CD8-positive, alpha-beta T cell (primary cell): ENCODE measurements at regions of chr11 and their contacts with region 1.

Region 1: DNA sequence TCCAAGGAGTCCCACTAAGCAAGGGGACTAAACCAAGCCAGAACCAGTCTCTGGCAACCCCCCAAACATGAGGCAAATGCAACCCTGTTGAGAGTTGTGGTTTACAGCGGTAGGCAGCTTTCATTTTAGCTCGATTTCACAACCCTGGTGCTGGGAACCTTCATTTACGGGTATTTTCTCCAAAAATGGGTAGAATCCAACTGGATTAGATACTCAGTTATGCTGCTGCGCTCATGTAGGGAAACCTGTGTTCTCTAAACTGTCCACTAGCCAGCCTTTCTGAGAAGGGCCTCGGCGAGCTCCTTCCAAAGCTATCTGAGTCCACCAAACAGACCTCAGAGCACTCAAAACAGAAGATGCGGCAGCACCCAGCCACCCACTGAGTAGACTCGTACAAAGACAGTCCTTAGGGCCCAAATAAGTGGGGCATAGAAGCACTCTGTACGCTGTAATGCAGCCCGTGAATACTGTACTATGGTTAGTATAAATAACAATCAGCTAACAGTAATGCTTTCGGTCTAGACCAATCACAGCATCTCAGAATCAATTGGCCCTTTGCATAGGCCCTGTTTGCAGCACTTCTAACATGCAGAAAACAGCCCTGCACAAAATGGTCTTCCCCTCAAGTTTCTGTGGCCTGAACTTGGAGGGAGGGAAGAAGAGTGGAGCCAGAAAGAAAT is 104.7 kb downstream of the ETS1 start:
- DNase-seq: peak in 4 of 9 experiments; percentile 61 to 91 (median 82)
- ATAC-seq: peak; percentile 62
- H3K4me3 ChIP-seq: peak overlapping the region; percentile 26 to 40
- H3K4me3 Mint-ChIP-seq: peak overlapping the region; percentile 71
- H3K27ac ChIP-seq: peak overlapping the region; percentile 63 to 88
- H3K27ac Mint-ChIP-seq: peak overlapping the region; percentile 99
- H3K4me1 ChIP-seq: peaks cover 96% of the 10 kb centered on the region
- H3K4me1 Mint-ChIP-seq: peaks cover 96% of the 10 kb centered on the region
- H3K27me3 ChIP-seq: no peaks in the 10 kb centered on the region
- H3K27me3 Mint-ChIP-seq: no peaks in the 10 kb centered on the region
- CTCF ChIP-seq: no peak

Region 2: DNA sequence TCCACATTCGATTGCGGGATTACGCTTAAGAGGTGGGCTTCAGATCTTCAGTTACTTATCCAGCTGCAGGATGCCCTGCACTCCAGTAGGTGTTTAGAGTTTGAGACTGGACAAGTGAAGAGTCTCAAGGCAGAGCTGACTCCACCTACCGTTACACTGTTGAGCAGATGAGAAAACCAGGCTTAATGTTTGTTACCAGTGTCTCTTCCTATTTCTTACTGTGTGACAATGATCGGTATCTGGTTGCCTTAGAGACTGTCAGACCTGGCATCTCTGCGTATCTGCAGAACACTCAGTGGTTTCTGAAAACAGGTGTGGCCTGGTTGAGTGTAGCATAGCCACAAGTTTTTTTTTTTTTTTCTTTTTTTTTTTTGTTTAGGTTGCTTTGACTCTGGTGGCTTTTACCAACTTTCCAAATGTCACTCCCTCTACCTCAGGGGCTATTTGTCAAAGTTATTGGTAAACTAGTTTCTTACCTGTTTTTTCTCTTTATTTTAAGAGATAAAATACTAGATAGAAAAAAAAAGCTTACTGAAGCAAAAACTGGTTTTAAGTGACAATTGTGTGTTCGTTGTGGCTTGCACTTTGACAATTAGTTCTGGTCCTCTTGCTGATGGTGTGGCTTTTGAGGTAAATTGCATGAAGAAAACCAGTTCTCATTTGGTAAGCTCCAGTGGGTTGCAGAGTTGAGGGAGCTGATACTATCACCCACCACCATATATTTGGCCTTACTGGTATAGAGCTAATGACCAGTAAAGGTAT is 180.0 kb before region 1 on chr11:
- CTCF ChIA-PET with region 1: interaction called, 15 read pairs
- POLR2A ChIA-PET with region 1: interaction called, 15 read pairs
- intact Hi-C with region 1: no loop called
- DNase-seq: peak; percentile 49 to 97 (median 72)
- ATAC-seq: peak; percentile 85
- H3K4me3 ChIP-seq: peak overlapping the region; percentile 46 to 51
- H3K4me3 Mint-ChIP-seq: peak overlapping the region; percentile 88
- H3K27ac ChIP-seq: peak overlapping the region; percentile 87 to 89
- H3K27ac Mint-ChIP-seq: peak overlapping the region; percentile 99
- H3K4me1 ChIP-seq: peaks cover 88% of the 10 kb centered on the region
- H3K4me1 Mint-ChIP-seq: peaks cover 92% of the 10 kb centered on the region
- H3K27me3 ChIP-seq: no peaks in the 10 kb centered on the region
- H3K27me3 Mint-ChIP-seq: no peaks in the 10 kb centered on the region
- CTCF ChIP-seq: no peak

Region 3: DNA sequence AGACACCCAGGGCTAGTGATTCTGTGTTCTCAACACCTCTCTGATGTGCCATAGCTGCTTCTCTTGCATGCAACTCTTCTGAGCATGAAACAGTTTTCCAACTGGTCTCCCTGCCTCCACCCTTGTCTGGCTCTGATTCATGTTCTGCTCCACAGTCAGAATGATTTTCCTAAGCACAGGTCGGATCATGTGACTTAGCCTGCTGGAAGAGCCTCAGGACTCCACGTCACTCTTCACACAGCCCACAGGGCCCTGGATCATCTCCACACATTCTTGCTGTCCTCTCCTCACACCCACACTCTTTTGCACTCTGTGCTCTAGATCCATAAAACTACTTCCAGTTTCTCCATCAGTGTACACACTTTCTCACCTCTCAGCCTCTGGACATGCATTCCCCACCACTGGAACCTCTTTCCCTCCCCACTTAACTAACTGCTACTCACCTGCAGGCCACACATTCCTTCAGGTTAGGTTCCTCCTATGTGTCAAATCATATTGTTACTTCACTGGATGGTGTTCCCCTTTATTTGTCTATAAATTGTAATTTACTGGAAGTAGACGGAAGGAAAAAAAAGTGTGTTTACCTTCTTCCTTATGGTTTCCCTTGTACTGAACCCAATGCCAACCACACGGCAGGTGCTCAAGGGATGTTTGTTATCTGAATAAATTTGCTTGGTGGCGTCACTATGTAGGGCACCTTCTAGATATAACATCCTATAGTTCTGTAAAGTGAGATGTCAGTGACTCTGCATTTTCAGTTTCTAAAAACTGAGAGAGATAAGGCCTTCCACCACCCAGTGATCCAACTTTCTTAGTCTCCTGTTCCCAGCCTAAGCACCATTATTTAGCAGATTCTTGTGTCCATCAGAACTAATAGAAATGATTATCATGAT is 29.0 kb before region 1 on chr11:
- CTCF ChIA-PET with region 1: interaction called, 4 read pairs
- POLR2A ChIA-PET with region 1: interaction called, 15 read pairs
- intact Hi-C with region 1: no loop called
- DNase-seq: peak in 1 of 9 experiments; percentile 19
- ATAC-seq: peak; percentile 63
- H3K4me3 ChIP-seq: no peak overlapping the region
- H3K4me3 Mint-ChIP-seq: no peak overlapping the region
- H3K27ac ChIP-seq: peak overlapping the region in 1 of 2 experiments; percentile 32
- H3K27ac Mint-ChIP-seq: peak overlapping the region; percentile 91
- H3K4me1 ChIP-seq: peaks cover 25% of the 10 kb centered on the region
- H3K4me1 Mint-ChIP-seq: peaks cover 76% of the 10 kb centered on the region
- H3K27me3 ChIP-seq: no peaks in the 10 kb centered on the region
- H3K27me3 Mint-ChIP-seq: no peaks in the 10 kb centered on the region
- CTCF ChIP-seq: no peak

Region 4: DNA sequence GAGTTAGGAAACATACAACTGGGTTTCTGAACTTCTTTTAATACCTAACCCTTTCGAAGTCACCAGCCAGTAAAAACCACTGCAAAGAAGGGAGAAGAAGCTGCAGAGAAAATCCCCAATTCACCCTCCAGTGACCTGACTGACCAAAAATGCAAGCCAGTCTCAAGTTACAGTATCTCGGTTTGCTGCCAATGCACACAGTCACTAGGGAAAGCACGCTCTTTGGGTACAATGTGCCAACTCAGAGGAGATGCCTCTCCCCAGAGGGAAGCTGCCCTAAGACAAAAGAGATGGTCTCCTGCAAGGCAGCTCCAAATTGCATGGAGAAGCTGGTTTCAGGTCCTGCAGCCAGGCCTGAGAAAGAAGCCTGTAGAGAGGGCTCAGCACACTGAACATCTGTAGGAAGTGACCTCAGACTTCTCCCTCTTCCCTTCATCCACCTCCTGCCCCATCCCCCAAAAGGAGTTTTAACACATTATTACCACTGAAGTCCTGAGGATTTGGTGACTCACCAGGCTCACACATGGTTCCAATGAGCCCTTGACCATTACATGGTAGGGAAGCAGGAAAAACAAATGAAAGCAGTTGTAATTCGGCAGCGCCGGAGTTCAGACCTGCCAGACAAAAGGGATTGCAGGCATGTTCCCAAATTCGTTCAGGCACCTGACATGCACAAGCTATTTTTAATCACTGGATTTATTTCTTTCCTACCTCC is 14.6 kb after region 1 on chr11:
- CTCF ChIA-PET with region 1: interaction called, 24 read pairs
- POLR2A ChIA-PET with region 1: interaction called, 138 read pairs
- intact Hi-C with region 1: loop called in 1 of 2 experiments (anchors 1 kb)
- DNase-seq: peak in 2 of 9 experiments; percentile 51 to 64
- ATAC-seq: no peak
- H3K4me3 ChIP-seq: peak overlapping the region; percentile 24 to 43
- H3K4me3 Mint-ChIP-seq: peak overlapping the region; percentile 83
- H3K27ac ChIP-seq: peak overlapping the region; percentile 49 to 75
- H3K27ac Mint-ChIP-seq: peak overlapping the region; percentile 98
- H3K4me1 ChIP-seq: peaks cover 98% of the 10 kb centered on the region
- H3K4me1 Mint-ChIP-seq: peaks cover 96% of the 10 kb centered on the region
- H3K27me3 ChIP-seq: no peaks in the 10 kb centered on the region
- H3K27me3 Mint-ChIP-seq: no peaks in the 10 kb centered on the region
- CTCF ChIP-seq: no peak

Region 5: DNA sequence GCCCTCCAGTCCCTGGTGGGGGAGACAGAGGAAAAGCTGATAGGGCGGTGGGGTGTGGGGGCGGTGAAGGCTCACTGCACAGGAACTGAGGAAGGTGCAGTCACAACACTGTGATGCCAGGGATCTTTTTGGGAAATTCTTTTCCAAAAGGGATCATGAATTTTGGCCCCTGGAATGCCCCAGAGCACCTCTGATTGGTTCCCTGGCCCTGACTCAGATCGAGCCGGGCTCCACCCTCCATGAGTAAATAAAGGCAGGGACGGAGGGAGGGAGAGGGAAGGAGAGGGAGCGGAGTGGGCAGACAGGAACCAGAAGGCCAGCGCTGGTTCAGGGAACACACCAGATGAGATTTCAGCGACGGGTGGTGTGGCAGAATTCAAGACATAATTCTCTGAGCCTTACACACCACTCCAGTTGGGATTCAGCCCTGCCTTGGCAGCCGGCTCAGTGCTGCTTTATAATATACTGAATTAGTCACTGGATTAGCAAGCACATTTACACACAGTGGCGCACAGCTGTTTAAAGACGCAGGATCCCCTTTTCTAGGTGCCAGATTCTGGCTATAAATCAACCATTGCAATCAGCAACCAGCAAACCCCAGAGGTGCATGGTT is 24.5 kb after region 1 on chr11:
- CTCF ChIA-PET with region 1: interaction called, 24 read pairs
- POLR2A ChIA-PET with region 1: interaction called, 28 read pairs
- intact Hi-C with region 1: no loop called
- DNase-seq: peak in 4 of 9 experiments; percentile 51 to 65 (median 60)
- ATAC-seq: peak; percentile 30
- H3K4me3 ChIP-seq: peak overlapping the region; percentile 37 to 94
- H3K4me3 Mint-ChIP-seq: peak overlapping the region; percentile 84
- H3K27ac ChIP-seq: peak overlapping the region; percentile 48 to 75
- H3K27ac Mint-ChIP-seq: peak overlapping the region; percentile 98
- H3K4me1 ChIP-seq: peaks cover 100% of the 10 kb centered on the region
- H3K4me1 Mint-ChIP-seq: peaks cover 97% of the 10 kb centered on the region
- H3K27me3 ChIP-seq: no peaks in the 10 kb centered on the region
- H3K27me3 Mint-ChIP-seq: no peaks in the 10 kb centered on the region
- CTCF ChIP-seq: no peak

Region 6: DNA sequence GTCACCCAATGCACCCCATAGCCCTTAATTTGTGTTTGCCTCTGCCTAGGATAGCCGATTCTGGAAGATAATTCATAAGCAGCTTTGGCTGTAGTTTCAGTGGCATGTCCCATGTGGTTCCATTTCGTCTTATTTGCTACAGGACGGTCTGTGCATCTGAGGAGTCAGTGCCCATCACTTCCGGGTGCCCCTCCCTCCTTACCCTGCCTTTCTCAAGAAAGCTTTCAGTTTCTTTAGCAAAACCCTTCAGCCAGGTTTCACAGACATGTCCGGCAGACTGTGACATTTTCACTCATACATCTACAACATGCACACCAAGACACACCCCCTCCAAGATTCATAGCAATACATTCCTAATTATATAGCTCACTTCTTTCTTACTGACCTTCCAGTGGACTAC is 445.7 kb after region 1 on chr11:
- CTCF ChIA-PET with region 1: no interaction called
- POLR2A ChIA-PET with region 1: no interaction called
- intact Hi-C with region 1: no loop called
- DNase-seq: peak in 2 of 9 experiments; percentile 33 to 52
- ATAC-seq: no peak
- H3K4me3 ChIP-seq: no peak overlapping the region
- H3K4me3 Mint-ChIP-seq: peak overlapping the region; percentile 0
- H3K27ac ChIP-seq: no peak overlapping the region
- H3K27ac Mint-ChIP-seq: no peak overlapping the region
- H3K4me1 ChIP-seq: no peaks in the 10 kb centered on the region
- H3K4me1 Mint-ChIP-seq: no peaks in the 10 kb centered on the region
- H3K27me3 ChIP-seq: no peaks in the 10 kb centered on the region
- H3K27me3 Mint-ChIP-seq: no peaks in the 10 kb centered on the region
- CTCF ChIP-seq: no peak